Breast epithelium (tissue), 4 donors: ENCODE measurements at regions of chr5 and their contacts with region 1.

Region 1: GRCh38 chr5:90461292-90461691 is 13.3 kb downstream of the MBLAC2 start:
- DNase-seq: no peak
- H3K4me3 ChIP-seq: no peak overlapping the region
- H3K27ac ChIP-seq: no peak overlapping the region
- H3K4me1 ChIP-seq: no peaks in the 10 kb centered on the region
- H3K27me3 ChIP-seq: no peaks in the 10 kb centered on the region
- CTCF ChIP-seq: no peak
- POLR2A ChIP-seq: no peak

Region 2: DNA sequence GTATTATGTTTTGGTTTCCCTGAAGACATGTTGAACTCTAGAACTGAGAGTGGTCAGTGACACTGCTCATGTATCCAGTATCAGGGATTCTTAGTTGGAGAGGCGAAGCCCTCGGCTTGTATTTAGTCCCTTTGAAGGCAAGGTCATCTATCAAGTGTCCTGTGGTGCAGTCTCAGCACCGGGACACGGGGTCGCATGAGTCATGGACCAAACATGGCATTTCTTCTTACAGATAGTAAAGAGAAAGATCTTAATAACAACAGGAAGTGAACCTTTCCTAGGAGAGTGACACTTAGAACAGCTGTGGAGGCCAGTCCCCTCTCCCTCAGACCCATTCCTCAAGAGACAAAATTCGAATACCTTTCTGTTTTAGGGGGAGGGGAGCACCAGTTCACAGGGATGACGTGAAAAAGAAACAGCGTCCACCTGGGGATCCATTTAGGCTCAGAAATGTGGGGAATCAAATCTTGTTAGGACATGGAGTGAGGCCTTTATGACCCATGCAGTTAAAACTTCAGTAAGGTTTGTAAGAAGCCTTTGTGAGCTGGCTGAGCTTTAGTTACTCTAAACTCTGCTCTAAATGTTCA is 183.8 kb after region 1 on chr5:
- intact Hi-C with region 1: loop called (anchors 5 kb)
- DNase-seq: no peak
- H3K4me3 ChIP-seq: no peak overlapping the region
- H3K27ac ChIP-seq: no peak overlapping the region
- H3K4me1 ChIP-seq: no peaks in the 10 kb centered on the region
- H3K27me3 ChIP-seq: no peaks in the 10 kb centered on the region
- CTCF ChIP-seq: no peak
- POLR2A ChIP-seq: no peak